A549 (cell line): ENCODE measurements at regions of chr12 and their contacts with region 1.

Region 1: DNA sequence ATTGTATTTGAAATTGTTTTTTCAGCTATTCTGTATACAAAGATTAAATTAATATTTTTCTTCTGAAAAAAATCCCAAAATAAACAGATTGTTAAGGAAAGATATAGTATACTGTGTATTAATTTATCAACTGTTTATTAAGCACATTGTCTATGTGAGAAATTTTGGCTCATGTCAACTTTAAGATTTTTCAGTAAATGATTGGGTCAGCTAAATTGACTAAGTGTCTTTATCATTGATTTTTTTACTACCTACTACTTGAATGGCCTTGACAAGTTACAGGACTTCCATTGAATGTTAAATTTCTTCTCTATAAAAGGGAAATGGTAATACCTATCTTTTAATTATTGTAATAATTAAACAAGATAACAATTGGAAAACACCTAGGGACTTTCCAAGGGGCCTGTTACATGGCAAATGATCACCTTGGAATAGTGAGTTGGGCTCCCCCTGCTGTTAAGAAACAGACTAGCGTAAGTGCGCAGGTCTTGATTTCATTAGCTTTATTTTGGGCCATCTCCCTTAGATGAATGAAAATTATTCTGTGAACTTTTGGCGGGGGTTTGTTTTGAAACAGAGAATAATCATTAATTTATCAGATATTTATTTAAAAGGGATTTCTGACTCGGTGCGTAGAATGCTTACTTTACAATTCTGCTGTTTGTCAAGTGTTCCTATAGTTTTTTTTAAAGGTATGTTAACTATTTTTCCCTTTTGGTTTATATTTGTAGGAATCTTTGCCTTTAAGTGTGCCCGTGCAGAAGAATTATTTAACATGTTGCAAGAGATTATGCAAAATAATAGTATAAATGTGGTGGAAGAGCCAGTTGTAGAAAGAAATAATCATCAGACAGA is 14.5 kb upstream of the CCT2 start:
- DNase-seq: peak; percentile 62 to 83
- ATAC-seq: peak in 1 of 2 experiments; percentile 74; a peak in 3 of 6 replicates
- H3K4me3 ChIP-seq: peak overlapping the region; percentile 22; the same call in 1 of the 3 replicates
- H3K27ac ChIP-seq: peak overlapping the region; percentile 74 to 89
- H3K4me1 ChIP-seq: peaks cover 39% of the 10 kb centered on the region
- CTCF ChIP-seq: peak; percentile 91
- EP300 ChIP-seq: no peak
- POLR2A ChIP-seq: no peak
- RAD21 ChIP-seq: peak; percentile 81 to 88

Region 2: DNA sequence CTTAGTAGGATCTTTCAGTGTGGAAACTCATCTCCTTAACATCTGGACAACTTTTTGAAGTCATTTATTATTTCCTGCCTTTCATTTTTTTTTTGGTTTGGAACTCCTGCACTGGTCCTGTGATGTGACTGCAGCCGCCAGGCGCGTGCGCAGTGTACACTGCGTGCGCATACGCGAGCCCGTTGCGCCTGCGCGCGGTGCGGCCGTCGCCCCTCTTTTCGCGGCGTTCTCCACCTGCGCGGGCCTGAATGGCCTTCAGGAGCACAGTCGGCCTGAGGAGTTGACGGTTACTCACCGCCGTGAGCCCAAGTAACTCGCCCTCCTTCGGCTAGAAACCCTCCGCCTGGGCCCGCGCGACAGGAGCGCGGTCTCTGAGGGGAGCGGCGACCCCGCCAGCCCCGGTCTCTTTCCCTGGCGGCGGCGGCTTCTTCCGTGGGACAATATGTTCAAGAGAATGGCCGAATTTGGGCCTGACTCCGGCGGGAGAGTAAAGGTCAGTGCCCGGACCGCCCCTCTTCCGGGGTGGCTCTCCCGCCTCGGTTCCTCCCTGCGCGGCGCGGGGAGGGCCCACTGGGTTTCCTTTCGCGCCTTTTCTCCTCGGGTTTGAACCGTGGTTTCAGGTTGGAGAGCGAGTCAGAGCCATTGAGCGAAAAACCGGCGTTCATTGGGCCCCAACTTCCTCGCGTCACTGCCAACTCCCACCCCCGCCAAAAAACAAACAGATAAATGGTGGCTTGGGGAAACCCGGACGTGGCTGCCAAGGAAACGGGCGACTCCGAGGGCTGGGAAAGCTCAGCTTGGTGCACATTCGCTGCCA is 211.0 kb before region 1 on chr12 and contains the start of gene YEATS4:
- CTCF ChIA-PET with region 1: interaction called, 37 read pairs
- POLR2A ChIA-PET with region 1: interaction called, 7 read pairs
- DNase-seq: peak; percentile 95 to 96
- ATAC-seq: peak; percentile 91 to 94
- H3K4me3 ChIP-seq: peak within 1 kb of the TSS; percentile 83
- H3K27ac ChIP-seq: peak within 1 kb of the TSS; percentile 94 to 96
- H3K4me1 ChIP-seq: peaks cover 14% of the 10 kb centered on the region
- CTCF ChIP-seq: no peak
- EP300 ChIP-seq: no peak
- POLR2A ChIP-seq: peak; percentile 87
- RAD21 ChIP-seq: no peak
- polyA plus RNA-seq, gene YEATS4: 43.4 and 70.1 TPM in 2 replicates

Region 3: DNA sequence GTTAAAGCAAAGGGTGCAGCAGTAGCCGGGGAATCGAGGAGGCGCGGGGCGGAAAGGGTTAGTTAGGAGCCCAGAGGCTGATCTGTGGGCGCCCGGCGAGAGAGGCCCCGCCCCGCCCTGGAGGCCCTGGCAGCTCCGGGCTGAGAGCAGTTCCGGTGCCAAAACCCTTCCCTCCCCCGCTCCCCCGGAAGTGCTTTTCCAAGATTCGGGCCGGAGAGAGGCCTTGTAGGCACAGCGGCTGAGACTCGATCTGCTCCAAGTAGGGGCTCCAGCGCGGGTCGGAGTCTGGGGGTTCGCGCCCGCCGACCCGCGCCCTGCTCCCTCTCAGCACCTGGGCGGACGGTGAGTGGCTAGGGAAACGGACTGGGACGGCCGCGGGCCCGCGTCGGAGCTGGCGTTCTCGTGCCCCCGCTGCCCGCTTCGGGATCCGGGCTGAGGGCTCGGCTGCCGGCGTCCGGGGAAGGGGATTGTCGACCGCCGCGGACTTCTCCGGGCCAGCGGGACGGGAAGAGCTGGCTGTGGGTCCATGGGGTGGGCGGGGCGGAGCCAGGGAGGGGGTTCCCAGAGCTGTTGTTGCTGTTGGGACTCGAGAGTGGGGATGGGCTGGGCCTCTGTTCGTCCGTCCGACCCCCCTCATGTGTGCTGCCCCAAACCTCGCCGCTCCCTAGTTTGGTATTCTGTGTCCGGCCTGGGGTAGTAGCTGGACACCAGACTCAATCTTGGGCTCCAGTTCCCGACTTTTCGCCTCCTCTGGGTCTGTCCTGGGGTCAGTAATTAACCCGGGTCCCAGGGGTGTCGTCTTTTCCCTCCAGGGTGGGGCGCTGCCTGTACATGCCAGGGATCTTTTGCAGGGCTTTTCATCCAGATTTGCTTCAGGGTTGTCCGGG is 100.3 kb before region 1 on chr12 and contains the start of gene FRS2:
- CTCF ChIA-PET with region 1: interaction called, 29 read pairs
- POLR2A ChIA-PET with region 1: interaction called, 20 read pairs
- DNase-seq: peak; percentile 90 to 94
- ATAC-seq: peak; percentile 98 to 99
- H3K4me3 ChIP-seq: peak within 1 kb of the TSS; percentile 92
- H3K27ac ChIP-seq: peak within 1 kb of the TSS; percentile 96 to 97
- H3K4me1 ChIP-seq: peaks cover 50% of the 10 kb centered on the region
- CTCF ChIP-seq: peak; percentile 49
- EP300 ChIP-seq: no peak
- POLR2A ChIP-seq: peak; percentile 69
- RAD21 ChIP-seq: peak; percentile 67 to 81
- polyA plus RNA-seq, gene FRS2: 23.5 and 28.6 TPM in 2 replicates

Region 4: GRCh38 chr12:69527506-69528272 is 43.1 kb before region 1 on chr12:
- CTCF ChIA-PET with region 1: interaction called, 11 read pairs
- POLR2A ChIA-PET with region 1: no interaction called
- DNase-seq: no peak
- ATAC-seq: peak in 1 of 2 experiments; percentile 55; a peak in 3 of 6 replicates
- H3K4me3 ChIP-seq: no peak overlapping the region
- H3K27ac ChIP-seq: peak overlapping the region in 1 of 2 experiments; percentile 50; a peak in 3 of 6 replicates
- H3K4me1 ChIP-seq: peaks cover 21% of the 10 kb centered on the region
- CTCF ChIP-seq: no peak
- EP300 ChIP-seq: no peak
- POLR2A ChIP-seq: no peak
- RAD21 ChIP-seq: no peak

Region 5: DNA sequence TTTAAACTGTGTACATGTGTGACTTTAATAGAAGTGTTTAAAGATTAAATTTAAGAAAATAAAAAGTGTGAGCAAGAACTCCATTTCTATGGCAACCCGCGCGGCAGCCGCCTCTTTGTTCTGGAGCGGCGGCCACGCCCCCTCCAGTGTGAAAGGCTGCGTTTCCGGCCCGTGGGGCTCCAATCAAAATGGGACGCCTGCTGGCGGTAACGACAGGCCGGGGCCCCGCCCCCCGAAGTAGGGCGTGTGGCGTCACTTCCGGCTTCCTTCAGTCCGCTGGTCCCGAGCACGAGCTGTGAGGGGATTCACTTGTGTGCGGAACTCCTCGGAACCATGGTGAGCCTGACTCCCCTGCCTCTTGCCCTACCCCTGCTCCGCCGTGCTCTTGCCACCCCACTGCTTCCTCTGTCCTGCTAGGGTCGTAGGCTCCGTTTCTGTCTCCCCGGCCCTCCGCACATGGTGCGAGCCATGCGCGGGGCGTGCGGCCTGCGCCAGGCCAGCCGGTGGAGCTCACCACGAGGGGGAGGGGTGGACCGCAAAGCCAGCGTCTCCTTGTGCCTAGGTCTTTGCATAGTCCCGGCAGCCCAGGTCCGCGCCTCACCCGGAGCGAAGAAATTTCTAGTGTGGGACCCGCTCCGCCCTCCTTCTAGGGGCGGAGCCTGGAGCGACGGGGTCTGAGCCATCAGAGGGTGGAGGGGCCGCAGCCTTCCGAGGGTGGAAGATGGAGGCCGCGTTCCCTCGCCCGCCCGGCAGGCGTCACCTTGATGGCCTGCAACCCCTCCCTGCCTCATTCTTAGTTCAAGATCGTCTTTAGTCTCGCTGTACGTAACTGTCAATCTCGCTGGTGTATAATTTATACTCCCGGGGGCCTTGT is 14.7 kb after region 1 on chr12 and contains the start of gene CCT2:
- CTCF ChIA-PET with region 1: interaction called, 35 read pairs
- POLR2A ChIA-PET with region 1: interaction called, 6 read pairs
- DNase-seq: peak; percentile 91 to 96
- ATAC-seq: peak; percentile 94 to 97
- H3K4me3 ChIP-seq: peak within 1 kb of the TSS; percentile 90
- H3K27ac ChIP-seq: peak within 1 kb of the TSS; percentile 96 to 97
- H3K4me1 ChIP-seq: peaks cover 10% of the 10 kb centered on the region
- CTCF ChIP-seq: no peak
- EP300 ChIP-seq: no peak
- POLR2A ChIP-seq: peak; percentile 98
- RAD21 ChIP-seq: peak in 1 of 2 experiments; percentile 29; a peak in 2 of 5 replicates
- polyA plus RNA-seq, gene CCT2: 492 and 548 TPM in 2 replicates